ENCODE measurements at regions of chr2 and their contacts with region 1.

Region 1: DNA sequence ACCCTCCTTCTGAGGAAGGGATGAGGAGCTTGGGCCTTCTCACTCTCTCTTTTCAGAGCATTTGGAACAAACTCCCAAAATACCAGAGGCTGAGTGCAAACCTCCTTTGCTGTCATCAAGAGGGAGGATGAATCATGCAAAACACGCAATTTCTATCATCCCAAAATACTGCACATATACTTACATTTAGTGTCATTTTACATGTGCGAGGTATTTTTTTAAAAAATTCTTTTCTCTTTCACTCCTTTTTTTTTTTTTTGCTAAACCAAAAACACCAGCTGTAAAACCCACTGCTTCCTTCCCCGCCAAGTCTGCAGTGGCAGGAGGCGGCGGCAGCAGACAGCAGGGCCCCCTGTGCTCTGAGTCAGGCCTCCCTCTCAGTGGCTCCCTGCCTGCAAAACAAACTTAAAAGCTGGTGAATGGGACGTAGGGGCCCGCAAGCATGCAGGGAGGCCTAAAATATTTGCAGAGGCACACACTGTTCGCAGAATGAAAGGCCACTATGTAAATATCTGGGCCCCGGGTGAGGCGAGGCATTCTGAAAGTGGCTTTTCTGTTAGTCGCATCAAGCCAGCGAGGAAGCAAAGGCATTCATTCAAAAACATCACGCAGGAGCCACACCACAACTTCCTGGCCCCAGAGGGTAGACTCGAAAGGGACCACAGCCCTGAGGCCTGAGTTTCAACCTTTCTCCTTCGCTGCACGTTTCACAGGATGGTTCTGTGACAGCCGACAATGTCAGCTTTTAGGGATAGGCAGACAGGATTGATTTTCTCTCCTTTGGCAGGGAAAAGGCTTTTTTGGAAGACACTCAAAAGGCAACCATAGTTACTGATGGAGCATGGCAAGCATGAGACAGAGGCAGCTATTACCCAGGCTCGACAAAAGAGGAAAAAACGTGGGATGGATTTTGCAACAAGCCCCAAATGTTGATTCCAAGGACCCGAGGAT is 73.4 kb downstream of the ACTR2 start:
- DNase-seq: peak; percentile 89
- H3K4me3 ChIP-seq: peak overlapping the region; percentile 44
- H3K27ac ChIP-seq: peak overlapping the region; percentile 86
- H3K4me1 ChIP-seq: peaks cover 50% of the 10 kb centered on the region
- CTCF ChIP-seq: 0 out of 2 replicates have a peak, but pooled peaks have one; percentile 31

Region 2: GRCh38 chr2:65350684-65351083 is 49.6 kb after region 1 on chr2:
- CTCF ChIA-PET with region 1: no interaction called
- POLR2A ChIA-PET with region 1: interaction called, 6 read pairs
- intact Hi-C with region 1: loop called (anchors 2 kb)
- DNase-seq: peak; percentile 83
- H3K4me3 ChIP-seq: peak overlapping the region; percentile 46
- H3K27ac ChIP-seq: peak overlapping the region; percentile 81
- H3K4me1 ChIP-seq: peaks cover 70% of the 10 kb centered on the region
- CTCF ChIP-seq: peak; percentile 74

Measured in OCI-LY7 (cell line).